Panc1 (cell line): ENCODE measurements at regions of chr14 and their contacts with region 1.

Region 1: DNA sequence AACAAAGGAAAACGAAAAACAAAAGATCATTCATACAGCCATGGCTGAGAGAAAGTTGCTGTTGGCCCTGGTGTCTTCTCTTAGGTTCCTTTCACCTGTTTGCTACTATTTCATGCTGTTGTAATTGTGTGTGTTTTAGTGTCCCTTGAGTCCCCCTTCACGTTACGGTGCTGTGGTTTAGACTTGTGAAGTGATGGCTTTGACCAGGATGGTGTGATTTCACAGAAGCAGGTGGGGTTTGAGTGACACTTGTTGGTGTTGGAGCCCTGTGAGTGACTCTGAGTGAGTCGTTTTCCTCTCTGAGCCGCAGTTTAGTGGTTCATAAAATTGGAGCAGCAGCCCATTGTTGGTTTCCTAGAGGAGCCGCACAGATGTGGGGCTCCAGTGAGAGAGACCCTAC is 635.4 kb downstream of the VRK1 start:
- DNase-seq: no peak
- ATAC-seq: no peak
- H3K4me3 ChIP-seq: no peak overlapping the region
- H3K27ac ChIP-seq: no peak overlapping the region
- H3K4me1 ChIP-seq: no peaks in the 10 kb centered on the region
- H3K27me3 ChIP-seq: no peaks in the 10 kb centered on the region
- CTCF ChIP-seq: no peak

Region 2: DNA sequence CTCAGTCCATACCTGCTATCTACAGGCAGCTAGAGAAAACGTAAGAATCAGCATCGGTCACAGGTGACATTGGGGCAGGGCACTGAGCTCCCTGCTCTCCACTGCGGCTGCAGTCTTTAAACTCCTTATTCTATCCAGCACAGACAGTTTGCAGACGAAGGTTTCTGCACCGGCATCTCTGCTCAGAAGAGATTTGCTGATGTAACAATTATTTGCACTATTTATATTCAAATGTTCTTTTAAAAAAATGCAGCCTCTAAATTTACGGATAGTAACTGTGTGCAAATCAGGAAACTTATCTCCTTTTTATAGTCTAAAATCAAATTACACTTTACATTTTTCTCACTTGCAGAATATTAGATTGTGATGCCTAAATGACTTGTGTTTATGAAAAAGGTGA is 35.6 kb after region 1 on chr14:
- CTCF ChIA-PET with region 1: no interaction called
- POLR2A ChIA-PET with region 1: interaction called, 12 read pairs
- in situ Hi-C with region 1: no loop called
- intact Hi-C with region 1: no loop called
- DNase-seq: no peak
- ATAC-seq: no peak
- H3K4me3 ChIP-seq: no peak overlapping the region
- H3K27ac ChIP-seq: no peak overlapping the region
- H3K4me1 ChIP-seq: no peaks in the 10 kb centered on the region
- H3K27me3 ChIP-seq: no peaks in the 10 kb centered on the region
- CTCF ChIP-seq: no peak

Region 3: GRCh38 chr14:97490521-97491070 is 58.0 kb after region 1 on chr14:
- CTCF ChIA-PET with region 1: no interaction called
- POLR2A ChIA-PET with region 1: no interaction called
- in situ Hi-C with region 1: no loop called
- intact Hi-C with region 1: no loop called
- DNase-seq: no peak
- ATAC-seq: no peak
- H3K4me3 ChIP-seq: no peak overlapping the region
- H3K27ac ChIP-seq: no peak overlapping the region
- H3K4me1 ChIP-seq: no peaks in the 10 kb centered on the region
- H3K27me3 ChIP-seq: no peaks in the 10 kb centered on the region
- CTCF ChIP-seq: no peak